Endothelial cell of umbilical vein (primary cell): ENCODE measurements at regions of chr11 and their contacts with region 1.

Region 1: GRCh38 chr11:131748151-131749050 is 378.0 kb downstream of the NTM start:
- DNase-seq: peak; percentile 85
- H3K4me3 ChIP-seq: no peak overlapping the region
- H3K27ac ChIP-seq: peak overlapping the region; percentile 92
- H3K4me1 ChIP-seq: peaks cover 56% of the 10 kb centered on the region
- H3K27me3 ChIP-seq: no peaks in the 10 kb centered on the region
- CTCF ChIP-seq: peak; percentile 83 to 84
- POLR2A ChIP-seq: no peak

Region 2: DNA sequence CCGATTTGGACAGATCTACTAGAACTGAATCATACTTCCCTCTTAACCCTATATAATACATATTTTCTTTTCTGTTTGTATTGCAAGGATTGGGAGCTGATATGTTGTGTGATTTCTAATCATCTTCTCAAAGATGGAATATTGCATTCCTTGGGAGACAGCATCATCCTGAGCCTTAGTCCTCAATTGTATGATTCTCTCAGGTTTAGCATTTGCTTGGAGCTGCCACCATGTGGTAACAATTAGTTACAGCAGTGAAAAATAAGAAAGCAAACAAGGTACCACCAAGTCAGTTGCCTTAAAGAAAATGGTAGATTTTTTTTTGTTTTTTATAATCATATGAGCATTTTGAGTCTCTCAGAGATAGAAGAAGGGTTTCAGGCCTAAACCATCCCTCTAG is 844.0 kb before region 1 on chr11:
- CTCF ChIA-PET with region 1: no interaction called
- POLR2A ChIA-PET with region 1: no interaction called
- dilution Hi-C with region 1: no loop called
- intact Hi-C with region 1: loop called (anchors 5 kb)
- DNase-seq: no peak
- H3K4me3 ChIP-seq: no peak overlapping the region
- H3K27ac ChIP-seq: peak overlapping the region; percentile 10
- H3K4me1 ChIP-seq: peaks cover 38% of the 10 kb centered on the region
- H3K27me3 ChIP-seq: no peaks in the 10 kb centered on the region
- CTCF ChIP-seq: peak; percentile 17 to 27
- POLR2A ChIP-seq: no peak

Region 3: DNA sequence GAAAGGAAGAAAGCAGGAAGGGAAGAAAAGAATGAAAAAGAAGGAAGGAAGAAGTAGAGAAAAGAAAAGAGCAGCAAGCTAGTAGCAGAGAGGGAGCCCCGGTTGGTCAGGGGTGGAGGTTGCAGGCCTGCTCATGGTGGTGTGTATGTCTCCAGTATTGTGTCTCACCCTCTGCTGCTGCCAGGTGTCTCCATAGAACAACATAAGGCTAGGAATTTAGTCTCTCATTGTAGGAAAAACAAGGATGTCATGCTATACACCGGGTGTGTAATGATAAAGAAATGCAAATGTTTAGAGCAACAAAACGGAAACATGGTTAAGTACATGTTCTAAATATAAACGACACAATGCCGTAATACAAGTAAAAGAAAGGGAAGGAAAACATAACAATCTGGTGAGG is 35.5 kb before region 1 on chr11:
- CTCF ChIA-PET with region 1: interaction called, 8 read pairs
- POLR2A ChIA-PET with region 1: no interaction called
- dilution Hi-C with region 1: no loop called
- intact Hi-C with region 1: loop called (anchors 1 kb)
- DNase-seq: peak; percentile 72
- H3K4me3 ChIP-seq: no peak overlapping the region
- H3K27ac ChIP-seq: peak overlapping the region; percentile 86
- H3K4me1 ChIP-seq: peaks cover 12% of the 10 kb centered on the region
- H3K27me3 ChIP-seq: no peaks in the 10 kb centered on the region
- CTCF ChIP-seq: no peak
- POLR2A ChIP-seq: no peak

Region 4: DNA sequence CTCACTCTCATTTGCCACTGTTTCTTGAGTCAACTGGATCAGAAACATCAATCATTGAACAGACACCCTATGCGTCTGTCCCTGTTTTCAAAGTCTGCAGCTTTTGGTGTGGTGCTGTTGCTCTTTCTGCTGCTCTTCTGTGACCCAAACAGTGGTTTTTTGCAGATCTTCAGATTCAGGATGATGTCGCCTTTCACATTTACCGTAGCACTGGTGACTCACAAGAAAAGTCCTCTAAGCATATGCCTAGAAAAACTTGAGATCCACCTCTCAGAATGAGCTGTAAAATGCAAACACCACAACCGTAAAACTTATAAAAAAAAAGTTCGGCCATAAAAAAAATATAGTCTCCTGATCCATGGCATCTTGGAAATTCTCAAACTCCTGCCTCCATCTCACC is 22.4 kb after region 1 on chr11:
- CTCF ChIA-PET with region 1: interaction called, 24 read pairs
- POLR2A ChIA-PET with region 1: no interaction called
- dilution Hi-C with region 1: no loop called
- intact Hi-C with region 1: no loop called
- DNase-seq: no peak
- H3K4me3 ChIP-seq: no peak overlapping the region
- H3K27ac ChIP-seq: no peak overlapping the region
- H3K4me1 ChIP-seq: peaks cover 9% of the 10 kb centered on the region
- H3K27me3 ChIP-seq: peaks cover 0 to 13% of the 10 kb centered on the region in 2 experiments
- CTCF ChIP-seq: no peak
- POLR2A ChIP-seq: no peak

Region 5: GRCh38 chr11:131867457-131868257 is 119.3 kb after region 1 on chr11:
- CTCF ChIA-PET with region 1: interaction called, 267 read pairs
- POLR2A ChIA-PET with region 1: interaction called, 4 read pairs
- dilution Hi-C with region 1: no loop called
- intact Hi-C with region 1: loop called (anchors 1 kb)
- DNase-seq: peak; percentile 80
- H3K4me3 ChIP-seq: no peak overlapping the region
- H3K27ac ChIP-seq: no peak overlapping the region
- H3K4me1 ChIP-seq: peaks cover 36% of the 10 kb centered on the region
- H3K27me3 ChIP-seq: no peaks in the 10 kb centered on the region
- CTCF ChIP-seq: peak; percentile 85 to 88
- POLR2A ChIP-seq: no peak

Region 6: GRCh38 chr11:132028380-132029240 is 280.2 kb after region 1 on chr11:
- CTCF ChIA-PET with region 1: interaction called, 10 read pairs
- POLR2A ChIA-PET with region 1: no interaction called
- dilution Hi-C with region 1: no loop called
- intact Hi-C with region 1: loop called (anchors 2 kb)
- DNase-seq: peak; percentile 74
- H3K4me3 ChIP-seq: no peak overlapping the region
- H3K27ac ChIP-seq: no peak overlapping the region
- H3K4me1 ChIP-seq: peaks cover 13% of the 10 kb centered on the region
- H3K27me3 ChIP-seq: no peaks in the 10 kb centered on the region
- CTCF ChIP-seq: peak; percentile 61 to 65
- POLR2A ChIP-seq: no peak

Region 7: GRCh38 chr11:132158093-132158492 is 409.7 kb after region 1 on chr11:
- CTCF ChIA-PET with region 1: interaction called, 3 read pairs
- POLR2A ChIA-PET with region 1: no interaction called
- dilution Hi-C with region 1: no loop called
- intact Hi-C with region 1: loop called (anchors 1 kb)
- DNase-seq: peak; percentile 32
- H3K4me3 ChIP-seq: no peak overlapping the region
- H3K27ac ChIP-seq: no peak overlapping the region
- H3K4me1 ChIP-seq: no peaks in the 10 kb centered on the region
- H3K27me3 ChIP-seq: no peaks in the 10 kb centered on the region
- CTCF ChIP-seq: peak; percentile 21 to 42
- POLR2A ChIP-seq: no peak